ENCODE measurements at regions of chr5 and their contacts with region 1.

Region 1: GRCh38 chr5:36264202-36264760 is 22.6 kb upstream of the NADK2 start:
- DNase-seq: no peak
- H3K4me3 ChIP-seq: no peak overlapping the region
- H3K27ac ChIP-seq: no peak overlapping the region
- H3K27me3 ChIP-seq: no peaks in the 10 kb centered on the region
- CTCF ChIP-seq: no peak

Region 2: GRCh38 chr5:36252722-36253365 is 11.4 kb before region 1 on chr5:
- CTCF ChIA-PET with region 1: interaction called, 28 read pairs
- POLR2A ChIA-PET with region 1: no interaction called
- DNase-seq: no peak
- H3K4me3 ChIP-seq: no peak overlapping the region
- H3K27ac ChIP-seq: no peak overlapping the region
- H3K27me3 ChIP-seq: no peaks in the 10 kb centered on the region
- CTCF ChIP-seq: no peak

Region 3: DNA sequence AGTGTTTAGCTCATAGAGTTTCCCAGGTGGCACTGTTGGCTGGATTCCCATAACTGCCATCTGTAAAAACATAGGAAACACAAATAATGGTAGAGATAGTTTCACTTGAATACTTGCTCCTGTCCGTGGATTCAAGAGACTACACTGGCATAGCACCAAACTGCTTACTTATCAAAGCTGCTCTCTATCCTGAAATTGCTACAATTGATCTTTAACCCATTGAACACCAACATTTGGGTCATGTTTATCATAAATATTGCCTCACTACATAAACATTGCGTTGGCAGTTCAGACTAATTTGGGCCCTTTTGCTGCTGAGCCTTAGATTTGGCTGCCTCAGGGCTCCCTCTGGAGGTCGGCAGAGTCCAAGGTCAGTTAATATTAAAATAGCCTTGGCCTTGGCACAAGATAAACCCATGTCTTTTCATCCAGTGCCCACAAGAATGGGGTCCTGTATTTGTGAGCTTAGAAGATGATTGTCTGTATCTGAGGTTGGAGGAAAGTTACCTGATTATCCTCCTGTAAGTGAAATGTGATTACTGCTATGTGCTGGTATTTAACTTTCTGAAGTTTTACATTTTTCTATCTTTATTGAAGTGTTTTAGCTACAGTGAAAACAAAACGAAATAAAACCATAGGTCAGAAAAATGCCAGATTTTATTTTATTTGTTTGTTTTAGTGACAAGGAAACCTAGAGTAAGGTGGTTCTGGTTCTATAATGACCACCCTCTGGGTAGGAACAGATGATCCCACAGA is 41.5 kb after region 1 on chr5:
- CTCF ChIA-PET with region 1: interaction called, 117 read pairs
- POLR2A ChIA-PET with region 1: no interaction called
- DNase-seq: no peak
- H3K4me3 ChIP-seq: no peak overlapping the region
- H3K27ac ChIP-seq: no peak overlapping the region
- H3K27me3 ChIP-seq: no peaks in the 10 kb centered on the region
- CTCF ChIP-seq: peak; percentile 85

Region 4: GRCh38 chr5:36507332-36507952 is 243.2 kb after region 1 on chr5:
- CTCF ChIA-PET with region 1: interaction called, 32 read pairs
- POLR2A ChIA-PET with region 1: no interaction called
- DNase-seq: no peak
- H3K4me3 ChIP-seq: no peak overlapping the region
- H3K27ac ChIP-seq: no peak overlapping the region
- H3K27me3 ChIP-seq: no peaks in the 10 kb centered on the region
- CTCF ChIP-seq: peak; percentile 94

Region 5: GRCh38 chr5:36695677-36696673 is 431.7 kb after region 1 on chr5:
- CTCF ChIA-PET with region 1: interaction called, 34 read pairs
- POLR2A ChIA-PET with region 1: no interaction called
- DNase-seq: peak; percentile 21
- H3K4me3 ChIP-seq: no peak overlapping the region
- H3K27ac ChIP-seq: no peak overlapping the region
- H3K27me3 ChIP-seq: peaks cover 7% of the 10 kb centered on the region
- CTCF ChIP-seq: peak; percentile 85